PC-3 (cell line): ENCODE measurements at regions of chr11 and their contacts with region 1.

Region 1: DNA sequence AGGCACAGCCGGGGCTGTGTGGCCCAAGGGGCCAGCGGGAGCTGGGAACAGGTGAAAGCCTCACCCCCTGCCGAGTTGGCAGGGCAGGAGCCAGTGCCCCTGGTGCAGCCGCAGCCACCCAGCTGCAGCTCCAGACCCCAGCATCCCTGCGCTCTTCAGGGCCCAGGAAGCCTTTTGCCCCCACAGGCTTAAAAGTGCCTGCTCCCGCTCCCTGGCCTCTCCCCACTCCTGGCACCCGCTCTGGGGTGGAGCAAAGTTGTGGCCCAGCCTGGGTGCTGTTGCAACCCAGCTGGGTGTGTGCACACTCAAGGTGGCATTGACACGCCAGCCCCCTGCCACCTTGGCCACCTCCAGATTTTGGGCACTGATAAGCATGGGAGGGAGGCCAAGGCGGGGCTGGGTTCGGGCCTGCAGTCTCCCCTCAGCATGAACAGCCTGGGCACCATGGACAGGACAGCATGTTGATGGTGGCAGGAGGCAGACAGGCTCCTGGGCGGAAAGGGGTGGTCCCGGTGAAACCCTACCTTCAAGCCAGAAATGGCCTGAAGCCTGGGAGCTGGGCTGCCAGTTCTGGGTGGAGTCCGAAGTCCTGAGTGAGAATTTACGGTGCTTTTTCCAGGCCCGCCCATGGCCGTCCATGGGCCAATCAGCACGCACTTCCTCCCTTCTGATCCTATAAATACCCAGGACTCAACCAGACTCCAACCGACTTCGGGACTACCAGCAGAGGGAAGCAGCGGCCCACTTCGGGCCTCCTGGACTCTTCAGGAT is 23.5 kb upstream of the RNASEH2C start:
- DNase-seq: peak; percentile 70
- ATAC-seq: peak; percentile 84
- H3K4me3 ChIP-seq: no peak overlapping the region
- H3K27ac ChIP-seq: no peak overlapping the region
- H3K4me1 ChIP-seq: no peaks in the 10 kb centered on the region
- H3K27me3 ChIP-seq: peaks cover under 1% of the 10 kb centered on the region; the same call in 1 of the 2 replicates
- CTCF ChIP-seq: peak; percentile 66

Region 2: GRCh38 chr11:65662799-65663638 is 81.1 kb before region 1 on chr11 and contains the start of gene RELA:
- CTCF ChIA-PET with region 1: no interaction called
- POLR2A ChIA-PET with region 1: no interaction called
- intact Hi-C with region 1: no loop called
- DNase-seq: peak; percentile 95
- ATAC-seq: peak; percentile 79
- H3K4me3 ChIP-seq: peak within 1 kb of the TSS; percentile 91
- H3K27ac ChIP-seq: peak within 1 kb of the TSS; percentile 68
- H3K4me1 ChIP-seq: peaks cover 18% of the 10 kb centered on the region
- H3K27me3 ChIP-seq: no peaks in the 10 kb centered on the region
- CTCF ChIP-seq: no peak
- total RNA-seq, gene RELA: 70.3 and 84.2 TPM in 2 replicates

Region 3: DNA sequence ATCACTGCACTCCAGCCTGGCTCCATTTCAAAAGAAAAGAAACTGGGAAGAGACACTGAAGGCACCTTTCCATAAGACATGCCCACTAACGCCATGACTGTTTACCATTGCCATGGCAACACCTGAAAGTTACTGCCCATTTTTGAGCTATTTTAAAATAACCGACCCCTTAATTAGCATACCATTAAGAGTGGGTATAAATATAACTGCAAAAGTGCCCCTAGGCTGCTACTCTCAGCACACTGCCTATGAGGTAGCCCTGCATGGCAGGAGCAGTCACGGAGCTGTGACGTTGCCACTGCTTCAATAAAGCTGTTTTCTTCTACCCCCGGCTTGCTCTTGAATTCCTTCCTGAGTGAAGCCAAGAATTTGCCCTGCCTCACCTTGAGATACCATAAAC is 13.6 kb before region 1 on chr11:
- CTCF ChIA-PET with region 1: interaction called, 3 read pairs
- POLR2A ChIA-PET with region 1: interaction called, 12 read pairs
- intact Hi-C with region 1: no loop called
- DNase-seq: no peak
- ATAC-seq: no peak
- H3K4me3 ChIP-seq: no peak overlapping the region
- H3K27ac ChIP-seq: no peak overlapping the region
- H3K4me1 ChIP-seq: no peaks in the 10 kb centered on the region
- H3K27me3 ChIP-seq: peaks cover 5% of the 10 kb centered on the region; the same call in 1 of the 2 replicates
- CTCF ChIP-seq: no peak

Region 4: GRCh38 chr11:65817835-65818742 is 74.0 kb after region 1 on chr11:
- CTCF ChIA-PET with region 1: interaction called, 7 read pairs
- POLR2A ChIA-PET with region 1: no interaction called
- intact Hi-C with region 1: loop called (anchors 1 kb)
- DNase-seq: peak; percentile 94
- ATAC-seq: peak; percentile 85
- H3K4me3 ChIP-seq: peak overlapping the region; percentile 77
- H3K27ac ChIP-seq: peak overlapping the region; percentile 52
- H3K4me1 ChIP-seq: peaks cover 4% of the 10 kb centered on the region; the same call in 1 of the 2 replicates
- H3K27me3 ChIP-seq: no peaks in the 10 kb centered on the region
- CTCF ChIP-seq: peak; percentile 98

Region 5: DNA sequence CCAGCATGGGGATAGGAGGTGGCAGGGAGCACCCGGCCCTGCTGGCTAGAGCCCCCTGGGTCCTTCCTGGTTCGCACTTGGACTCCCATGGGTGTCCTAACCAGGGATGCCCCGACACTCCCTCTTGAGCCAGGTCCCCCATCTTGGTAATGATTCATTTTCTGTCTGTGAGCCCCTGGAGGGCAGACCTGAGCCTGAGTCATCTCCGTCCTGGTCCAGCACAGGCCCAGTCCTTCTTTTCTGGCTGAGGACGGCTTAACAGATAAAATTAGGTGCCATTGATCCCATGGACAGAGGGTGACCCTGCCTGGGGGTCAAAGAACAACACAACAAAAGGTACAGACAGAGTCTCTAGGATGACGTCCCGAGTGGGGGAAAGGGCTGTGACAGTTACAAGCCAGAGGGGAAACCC is 1316.0 kb after region 1 on chr11:
- CTCF ChIA-PET with region 1: no interaction called
- POLR2A ChIA-PET with region 1: no interaction called
- intact Hi-C with region 1: no loop called
- DNase-seq: peak; percentile 48
- ATAC-seq: 0 out of 2 replicates have a peak, but pooled peaks have one; percentile 3
- H3K4me3 ChIP-seq: no peak overlapping the region
- H3K27ac ChIP-seq: peak overlapping the region; percentile 1; the same call in 1 of the 2 replicates
- H3K4me1 ChIP-seq: peaks cover 50% of the 10 kb centered on the region
- H3K27me3 ChIP-seq: no peaks in the 10 kb centered on the region
- CTCF ChIP-seq: no peak